ENCODE measurements at regions of chr13 and their contacts with region 1.

Region 1: GRCh38 chr13:107124129-107124718 is 556.3 kb upstream of the ARGLU1 start:
- DNase-seq: no peak
- ATAC-seq: no peak
- H3K4me3 ChIP-seq: no peak overlapping the region
- H3K27ac ChIP-seq: no peak overlapping the region
- H3K4me1 ChIP-seq: peaks cover 0 to 5% (median 0%) of the 10 kb centered on the region in 12 donors
- H3K27me3 ChIP-seq: no peaks in the 10 kb centered on the region
- CTCF ChIP-seq: peak; percentile 40 to 80 (median 68)
- POLR2A ChIP-seq: no peak

Region 2: GRCh38 chr13:106083620-106084350 is 1040.4 kb before region 1 on chr13:
- intact Hi-C with region 1: loop called in 4 of 10 experiments (anchors 5 to 10 kb)
- DNase-seq: peak in 2 of 5 donors; percentile 17 to 23
- ATAC-seq: peak in 3 of 4 donors; percentile 33 to 63 (median 52)
- H3K4me3 ChIP-seq: no peak overlapping the region
- H3K27ac ChIP-seq: no peak overlapping the region
- H3K4me1 ChIP-seq: peaks cover 0 to 3% (median 0%) of the 10 kb centered on the region in 12 donors
- H3K27me3 ChIP-seq: no peaks in the 10 kb centered on the region
- CTCF ChIP-seq: peak; percentile 27 to 74 (median 56)
- POLR2A ChIP-seq: no peak

Region 3: GRCh38 chr13:106680796-106681472 is 443.3 kb before region 1 on chr13:
- intact Hi-C with region 1: loop called in 2 of 10 experiments (anchors 10 kb)
- DNase-seq: peak in 3 of 5 donors; percentile 32 to 39 (median 37)
- ATAC-seq: peak in 3 of 4 donors; percentile 20 to 71 (median 56)
- H3K4me3 ChIP-seq: no peak overlapping the region
- H3K27ac ChIP-seq: peak overlapping the region in 11 of 12 donors; percentile 18 to 68 (median 50)
- H3K4me1 ChIP-seq: peaks cover 0 to 27% (median 10%) of the 10 kb centered on the region in 12 donors
- H3K27me3 ChIP-seq: no peaks in the 10 kb centered on the region
- CTCF ChIP-seq: no peak
- POLR2A ChIP-seq: no peak

Region 4: GRCh38 chr13:107258599-107259187 is 134.5 kb after region 1 on chr13:
- intact Hi-C with region 1: no loop called
- DNase-seq: no peak
- ATAC-seq: no peak
- H3K4me3 ChIP-seq: no peak overlapping the region
- H3K27ac ChIP-seq: no peak overlapping the region
- H3K4me1 ChIP-seq: no peaks in the 10 kb centered on the region
- H3K27me3 ChIP-seq: no peaks in the 10 kb centered on the region
- CTCF ChIP-seq: no peak
- POLR2A ChIP-seq: no peak

Region 5: DNA sequence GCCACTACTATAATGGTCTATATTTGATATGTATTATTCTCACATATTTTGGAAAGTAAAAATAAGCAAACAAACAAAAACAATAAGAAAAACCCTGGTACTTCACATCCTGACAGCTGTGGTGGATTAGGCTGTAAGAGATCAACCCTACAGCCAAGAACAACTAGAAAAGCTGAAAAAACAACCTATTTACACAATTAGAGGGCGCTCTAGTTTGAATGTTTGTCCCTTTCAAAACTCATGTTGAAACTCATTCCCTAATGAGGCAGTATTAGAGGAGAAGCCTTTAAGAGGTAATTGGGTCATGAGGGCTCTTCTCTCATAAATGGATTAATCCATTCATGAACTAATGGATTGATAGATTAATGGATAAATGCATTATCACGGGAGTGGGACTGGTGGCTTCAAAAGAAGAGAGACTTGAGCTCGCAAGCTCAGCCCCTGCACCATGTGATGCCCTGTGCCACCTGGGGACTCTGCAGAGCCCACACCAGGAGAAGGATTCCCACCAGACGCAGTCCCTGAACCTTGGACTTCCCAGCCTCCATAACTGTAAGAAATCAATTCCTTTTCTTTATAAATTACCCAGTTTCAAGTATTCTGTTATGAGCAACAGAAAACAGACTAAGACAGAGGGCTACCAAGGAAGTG is 177.6 kb after region 1 on chr13:
- intact Hi-C with region 1: no loop called
- DNase-seq: no peak
- ATAC-seq: no peak
- H3K4me3 ChIP-seq: no peak overlapping the region
- H3K27ac ChIP-seq: no peak overlapping the region
- H3K4me1 ChIP-seq: no peaks in the 10 kb centered on the region
- H3K27me3 ChIP-seq: no peaks in the 10 kb centered on the region
- CTCF ChIP-seq: no peak
- POLR2A ChIP-seq: no peak